ENCODE measurements at regions of chr3 and their contacts with region 1.

Region 1: DNA sequence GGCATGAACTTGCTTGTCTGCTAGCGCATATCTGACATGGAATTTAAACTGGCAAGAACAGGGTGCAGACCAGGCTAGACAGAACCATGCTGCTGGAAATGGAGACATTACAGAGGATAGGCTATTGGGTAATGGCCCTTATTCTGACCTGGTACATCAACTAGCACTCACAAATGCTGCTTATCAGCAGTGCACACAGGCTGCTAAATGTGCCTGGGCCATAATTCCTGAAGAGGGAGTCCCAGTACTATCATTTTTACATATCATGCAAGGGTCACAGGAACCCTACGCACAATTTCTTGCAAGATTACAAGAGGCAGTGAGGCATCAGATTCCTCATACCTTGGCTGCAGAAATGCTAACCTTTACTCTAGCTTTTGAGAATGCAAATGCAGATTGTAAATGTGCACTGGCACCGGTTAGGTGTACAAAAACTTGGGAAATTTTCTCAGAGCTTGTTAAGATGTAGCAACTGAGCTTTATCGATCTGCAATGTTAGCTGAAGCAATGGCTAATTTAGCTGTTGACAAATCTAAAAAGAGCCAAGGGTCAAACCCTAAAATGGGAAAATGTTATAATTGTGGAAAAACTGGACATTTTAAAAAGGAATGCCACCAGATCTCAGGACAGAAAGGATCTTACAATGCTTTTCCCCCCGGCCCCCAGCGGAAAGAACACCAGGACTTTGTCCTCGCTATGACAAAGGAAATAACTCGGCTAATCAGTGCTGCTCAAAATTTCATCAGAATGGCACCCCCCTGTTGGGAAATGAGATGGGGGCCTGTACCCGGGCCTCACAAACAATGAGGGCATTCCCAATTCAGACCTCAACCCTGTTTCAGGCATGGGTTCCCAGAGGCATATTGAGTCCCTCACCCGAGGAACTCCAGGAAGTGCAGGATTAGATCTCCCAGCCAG is 21.1 kb downstream of the CCRL2 start:
- DNase-seq: no peak
- H3K4me3 ChIP-seq: no peak overlapping the region
- H3K27ac ChIP-seq: peak overlapping the region; percentile 65 to 81 (median 76)
- H3K4me1 ChIP-seq: peaks cover 0 to 20% (median 11%) of the 10 kb centered on the region in 4 donors
- H3K27me3 ChIP-seq: no peaks in the 10 kb centered on the region
- CTCF ChIP-seq: no peak
- EP300 ChIP-seq: no peak
- POLR2A ChIP-seq: no peak

Region 2: DNA sequence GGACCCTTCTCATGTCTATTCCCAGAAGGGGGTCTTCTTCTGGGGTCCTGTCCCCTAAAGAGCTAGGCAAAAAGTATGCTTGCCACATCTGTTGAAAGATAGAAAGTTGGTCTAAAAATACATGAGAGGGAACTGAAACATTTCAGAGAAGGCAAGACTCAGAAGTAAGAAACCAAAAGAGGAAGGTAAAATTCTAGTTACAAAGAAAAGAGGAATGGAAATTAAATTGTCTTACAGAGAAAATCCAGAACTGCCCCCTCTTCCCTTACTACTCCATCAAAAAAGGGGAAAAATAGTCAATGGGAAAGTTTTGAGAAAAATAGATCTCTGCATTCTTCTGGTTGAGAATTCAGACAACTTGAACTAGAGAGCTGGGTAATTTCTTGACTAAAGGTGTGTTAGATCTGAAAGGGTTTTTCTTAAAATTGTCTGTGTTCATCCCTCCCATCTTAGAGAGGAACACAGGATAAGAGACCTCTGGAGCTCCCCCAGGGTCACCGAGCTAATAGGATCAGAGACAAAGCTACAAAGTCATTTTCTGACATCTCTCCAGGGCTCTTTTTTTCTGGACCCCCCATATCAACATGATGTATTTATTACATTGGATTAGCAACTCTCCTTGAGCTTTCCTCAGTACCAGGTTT is 106.6 kb before region 1 on chr3:
- in situ Hi-C with region 1: no loop called
- intact Hi-C with region 1: loop called (anchors 5 kb)
- DNase-seq: no peak
- H3K4me3 ChIP-seq: no peak overlapping the region
- H3K27ac ChIP-seq: no peak overlapping the region
- H3K4me1 ChIP-seq: no peaks in the 10 kb centered on the region
- H3K27me3 ChIP-seq: no peaks in the 10 kb centered on the region
- CTCF ChIP-seq: no peak
- EP300 ChIP-seq: no peak
- POLR2A ChIP-seq: no peak

Measured in transverse colon (tissue), 4 donors.